ENCODE measurements at regions of chr16 and their contacts with region 1.

Region 1: DNA sequence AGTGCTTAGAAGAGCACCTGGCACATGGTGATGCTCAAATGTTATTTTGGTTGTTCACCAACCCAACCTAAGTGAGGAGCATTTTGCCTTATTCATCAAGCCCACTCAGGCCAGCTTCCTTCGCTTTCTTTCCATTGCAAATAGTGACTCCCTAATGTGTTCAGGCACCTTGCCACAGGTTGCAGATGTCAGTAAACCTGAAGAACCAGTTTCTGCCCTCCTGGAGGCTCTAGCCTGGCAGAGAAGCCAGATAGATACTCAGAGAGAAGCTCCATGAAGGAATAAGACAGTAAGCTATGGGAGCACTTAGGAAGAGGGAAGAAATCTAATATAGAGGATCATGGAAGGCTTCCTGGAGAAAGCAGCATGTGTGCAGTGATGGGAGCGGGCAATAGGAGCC is 23.8 kb downstream of the GPR139 start:
- DNase-seq: no peak

Region 2: DNA sequence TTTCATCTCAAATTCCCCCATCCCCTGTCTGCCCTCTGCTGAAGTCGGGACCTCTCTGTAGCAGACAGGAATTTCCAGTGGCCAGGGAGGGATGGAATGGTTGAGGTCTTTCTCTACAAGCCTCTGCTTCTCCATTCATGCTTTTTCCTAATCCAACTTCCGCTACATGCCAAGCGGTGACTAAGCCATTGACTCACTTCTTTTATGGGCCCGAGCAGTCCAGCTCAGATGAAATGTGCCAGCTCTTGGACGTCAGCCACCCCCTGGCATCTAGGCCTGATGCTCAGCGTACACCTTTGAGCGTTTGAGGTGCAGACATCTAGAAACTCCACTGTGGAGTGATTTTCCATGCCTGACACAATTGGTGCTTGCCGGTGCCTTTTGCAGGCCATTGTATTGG is 64.5 kb after region 1 on chr16:
- in situ Hi-C with region 1: loop called (anchors 10 kb)
- DNase-seq: no peak

Region 3: GRCh38 chr16:20598832-20599469 is 549.1 kb after region 1 on chr16:
- in situ Hi-C with region 1: no loop called
- DNase-seq: peak; percentile 7

Measured in KBM-7 (cell line).